Gastrocnemius medialis (tissue), 4 donors: ENCODE measurements at regions of chr18 and their contacts with region 1.

Region 1: DNA sequence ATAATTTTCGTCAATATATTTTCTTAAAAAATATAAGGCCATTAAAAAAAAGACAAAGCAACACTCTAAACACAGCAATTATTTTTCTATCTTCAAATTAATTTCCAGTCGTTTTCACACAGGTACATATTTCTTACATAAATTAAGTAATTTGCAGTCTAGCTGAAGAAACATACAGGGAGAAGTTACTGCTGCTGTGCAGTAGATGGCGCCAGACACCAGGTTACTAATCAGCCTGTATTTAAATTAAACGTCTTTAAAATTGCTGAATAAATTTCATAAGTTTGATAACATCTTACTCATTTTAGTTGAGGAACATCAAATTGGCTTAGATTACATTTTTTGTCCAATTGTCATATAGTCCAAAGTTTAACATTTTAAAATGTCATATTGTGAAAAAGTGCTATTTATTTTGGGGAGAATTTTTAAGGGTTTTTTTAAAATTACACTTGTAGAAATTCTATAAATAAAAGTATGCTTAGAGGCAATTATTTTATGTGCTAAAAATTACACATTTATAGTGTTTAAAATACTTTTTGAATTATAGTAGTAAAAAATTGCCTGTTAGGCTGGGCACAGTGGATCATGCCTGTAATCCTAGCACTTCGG is 88.4 kb downstream of the PMAIP1 start:
- DNase-seq: no peak
- ATAC-seq: no peak
- H3K4me3 ChIP-seq: no peak overlapping the region
- H3K27ac ChIP-seq: no peak overlapping the region
- H3K4me1 ChIP-seq: no peaks in the 10 kb centered on the region
- H3K27me3 ChIP-seq: no peaks in the 10 kb centered on the region
- CTCF ChIP-seq: peak; percentile 38 to 81 (median 65)
- POLR2A ChIP-seq: no peak

Region 2: GRCh38 chr18:60259052-60259681 is 271.0 kb after region 1 on chr18:
- in situ Hi-C with region 1: no loop called
- intact Hi-C with region 1: no loop called
- DNase-seq: no peak
- ATAC-seq: no peak
- H3K4me3 ChIP-seq: no peak overlapping the region
- H3K27ac ChIP-seq: no peak overlapping the region
- H3K4me1 ChIP-seq: no peaks in the 10 kb centered on the region
- H3K27me3 ChIP-seq: no peaks in the 10 kb centered on the region
- CTCF ChIP-seq: no peak
- POLR2A ChIP-seq: no peak

Region 3: DNA sequence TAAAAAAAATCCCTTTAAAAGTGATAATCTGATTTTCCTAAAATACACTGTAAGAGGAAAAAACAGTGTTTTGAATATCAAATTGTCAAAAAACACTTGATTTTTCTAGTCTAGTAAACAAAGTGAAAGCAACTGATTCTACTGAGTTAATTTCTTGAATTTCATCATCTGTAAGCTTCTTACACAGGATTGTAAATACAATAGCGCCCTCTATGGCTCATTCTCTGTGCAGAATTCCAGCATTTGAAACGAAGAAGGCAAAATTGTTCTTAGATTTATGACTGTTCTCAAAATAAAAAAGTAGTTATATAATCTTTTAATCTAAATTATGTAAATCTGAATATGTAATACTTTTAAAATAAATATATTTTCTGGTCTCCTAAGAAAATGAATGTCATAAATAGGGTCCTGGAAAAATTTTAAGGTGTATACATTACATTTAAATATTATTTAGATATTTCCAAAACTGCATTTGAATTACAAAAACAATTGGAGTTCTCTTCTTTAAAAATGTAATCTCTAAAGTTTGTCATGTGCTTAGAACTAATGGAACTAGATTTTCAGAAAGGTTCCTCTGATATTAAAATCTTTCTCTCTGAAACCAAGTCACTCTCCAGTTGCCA is 561.2 kb after region 1 on chr18:
- in situ Hi-C with region 1: loop called in 3 of 4 experiments (anchors 10 to 25 kb)
- intact Hi-C with region 1: no loop called
- DNase-seq: no peak
- ATAC-seq: no peak
- H3K4me3 ChIP-seq: no peak overlapping the region
- H3K27ac ChIP-seq: no peak overlapping the region
- H3K4me1 ChIP-seq: no peaks in the 10 kb centered on the region
- H3K27me3 ChIP-seq: no peaks in the 10 kb centered on the region
- CTCF ChIP-seq: peak in 4 of 5 experiments; percentile 18 to 52 (median 41)
- POLR2A ChIP-seq: no peak

Region 4: DNA sequence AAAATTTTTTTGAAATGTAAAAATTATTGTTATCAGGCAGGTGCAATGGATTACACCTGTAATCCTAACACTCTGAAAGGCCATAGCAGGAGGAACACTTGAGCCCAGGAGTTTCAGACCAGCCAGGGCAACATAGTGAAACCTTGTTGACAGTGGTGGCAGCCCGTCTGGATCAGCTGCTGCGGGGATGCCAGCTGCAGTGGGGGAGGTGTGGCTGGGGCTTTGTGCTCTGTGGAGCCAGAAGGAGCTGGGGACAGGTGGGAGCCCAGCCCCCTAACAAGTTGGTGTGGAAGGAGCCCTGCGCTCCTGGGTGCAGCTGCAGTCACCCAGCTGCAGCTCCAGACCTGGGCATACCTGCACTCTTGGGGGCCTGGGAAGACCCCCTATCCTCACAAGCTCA is 566.8 kb after region 1 on chr18:
- in situ Hi-C with region 1: loop called in 2 of 4 experiments (anchors 10 to 25 kb)
- intact Hi-C with region 1: no loop called
- DNase-seq: no peak
- ATAC-seq: no peak
- H3K4me3 ChIP-seq: no peak overlapping the region
- H3K27ac ChIP-seq: no peak overlapping the region
- H3K4me1 ChIP-seq: no peaks in the 10 kb centered on the region
- H3K27me3 ChIP-seq: no peaks in the 10 kb centered on the region
- CTCF ChIP-seq: no peak
- POLR2A ChIP-seq: no peak